Endothelial cell of umbilical vein (primary cell): ENCODE measurements at regions of chr11 and their contacts with region 1.

Region 1: DNA sequence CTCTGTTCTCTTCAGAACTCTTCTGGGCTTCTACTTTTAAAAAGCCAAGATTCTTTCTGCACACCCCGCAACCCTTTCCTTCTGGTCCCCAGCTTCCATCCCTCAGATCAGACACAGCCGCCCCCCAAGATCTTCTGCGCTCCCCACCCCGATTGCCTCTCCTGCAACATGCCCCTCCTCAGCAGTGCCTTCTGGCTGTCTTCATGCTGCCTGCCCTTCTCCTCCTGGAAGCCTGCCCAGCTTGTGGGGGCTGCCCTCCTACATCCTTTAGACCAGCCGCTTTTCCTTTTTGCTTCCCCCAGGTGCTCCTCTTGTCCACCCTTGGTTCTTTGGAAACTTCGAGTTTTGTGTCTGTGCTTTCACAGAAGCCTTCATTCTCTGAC is 144.2 kb downstream of the FEZ1 start:
- DNase-seq: no peak
- H3K4me3 ChIP-seq: no peak overlapping the region
- H3K27ac ChIP-seq: no peak overlapping the region
- H3K4me1 ChIP-seq: no peaks in the 10 kb centered on the region
- H3K27me3 ChIP-seq: peaks cover 0 to 2% of the 10 kb centered on the region in 2 experiments
- CTCF ChIP-seq: no peak
- POLR2A ChIP-seq: no peak

Region 2: GRCh38 chr11:125364121-125364826 is 12.4 kb after region 1 on chr11:
- CTCF ChIA-PET with region 1: interaction called, 12 read pairs
- POLR2A ChIA-PET with region 1: no interaction called
- dilution Hi-C with region 1: no loop called
- intact Hi-C with region 1: no loop called
- DNase-seq: no peak
- H3K4me3 ChIP-seq: no peak overlapping the region
- H3K27ac ChIP-seq: no peak overlapping the region
- H3K4me1 ChIP-seq: peaks cover 4% of the 10 kb centered on the region
- H3K27me3 ChIP-seq: no peaks in the 10 kb centered on the region
- CTCF ChIP-seq: no peak
- POLR2A ChIP-seq: no peak

Region 3: DNA sequence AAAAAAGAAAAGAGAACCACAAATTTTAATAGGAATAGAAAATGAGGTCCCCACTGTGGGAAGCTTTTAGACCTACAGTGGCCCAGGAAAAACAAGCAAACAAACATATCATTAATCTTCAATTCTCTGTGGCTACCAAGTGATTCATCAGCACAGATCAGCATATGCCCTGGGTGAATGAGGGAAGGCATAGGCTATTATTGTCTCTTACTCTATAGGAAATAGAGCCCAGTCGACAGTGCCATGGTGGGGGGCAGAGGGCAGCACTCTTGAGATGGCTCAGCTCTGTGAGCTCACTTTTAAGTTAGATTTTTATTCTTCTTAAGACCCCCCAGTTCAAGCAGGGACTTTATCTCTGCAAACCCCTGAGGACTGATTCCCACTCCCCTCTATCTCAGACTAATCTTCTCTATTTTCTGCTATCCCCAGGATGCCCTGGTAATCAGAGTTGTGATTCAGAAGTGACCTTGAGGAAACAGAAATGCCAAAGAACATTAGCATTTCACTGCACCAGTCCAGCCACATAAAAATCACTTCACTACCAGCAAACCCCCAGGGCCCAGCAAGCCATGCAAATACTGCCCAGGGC is 153.7 kb after region 1 on chr11:
- CTCF ChIA-PET with region 1: no interaction called
- POLR2A ChIA-PET with region 1: no interaction called
- dilution Hi-C with region 1: no loop called
- intact Hi-C with region 1: no loop called
- DNase-seq: no peak
- H3K4me3 ChIP-seq: no peak overlapping the region
- H3K27ac ChIP-seq: no peak overlapping the region
- H3K4me1 ChIP-seq: no peaks in the 10 kb centered on the region
- H3K27me3 ChIP-seq: peaks cover 4 to 6% of the 10 kb centered on the region in 2 experiments
- CTCF ChIP-seq: no peak
- POLR2A ChIP-seq: no peak